ENCODE measurements at regions of chr20 and their contacts with region 1.

Region 1: DNA sequence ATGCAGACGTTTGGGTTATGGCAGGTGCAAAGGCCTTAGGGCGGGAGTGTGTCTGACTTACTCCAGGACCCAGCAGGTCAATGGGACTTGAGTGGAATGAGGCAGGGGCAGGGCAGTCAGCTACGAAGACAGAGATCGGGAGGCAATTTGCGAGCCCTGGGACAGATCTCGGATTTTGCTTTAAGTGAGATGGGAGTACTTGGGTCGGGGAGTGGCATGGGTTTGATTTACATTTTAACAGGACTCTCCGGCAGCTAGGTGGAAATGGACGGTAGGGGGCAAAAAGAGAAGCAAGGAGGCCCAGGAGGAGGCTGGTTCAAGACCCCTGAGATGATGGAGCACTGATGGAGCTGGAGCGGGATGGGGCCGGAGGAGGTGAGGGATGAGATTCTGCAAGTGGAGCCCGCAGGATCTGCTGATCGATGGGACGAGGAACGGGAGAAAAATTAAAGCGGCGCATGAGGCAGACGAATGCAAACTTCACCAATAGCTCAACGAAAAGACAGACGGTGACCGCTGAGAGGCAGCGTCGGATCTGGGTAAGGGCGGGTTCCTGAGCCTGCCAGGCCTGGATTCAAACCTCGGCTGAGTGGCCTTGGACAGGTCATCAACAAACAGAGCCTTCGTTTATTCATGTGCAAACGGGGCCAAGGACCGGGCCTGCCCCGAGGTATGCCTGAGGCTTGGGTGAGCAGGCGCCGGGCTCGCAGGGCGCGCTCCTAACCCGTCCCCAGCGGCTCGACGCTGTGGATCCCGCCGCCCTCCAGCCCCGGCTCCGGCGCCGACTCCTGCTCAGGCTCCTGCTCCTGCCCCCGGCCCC is 756 bp upstream of the RBCK1 start:
- DNase-seq: peak in 8 of 9 donors; percentile 31 to 74 (median 39)
- ATAC-seq: peak; percentile 49
- H3K4me3 ChIP-seq: peak overlapping the region; percentile 71
- H3K4me3 Mint-ChIP-seq: peak overlapping the region; percentile 86 to 96 (median 94)
- H3K27ac ChIP-seq: peak overlapping the region; percentile 83
- H3K27ac Mint-ChIP-seq: peak overlapping the region; percentile 89 to 99 (median 96)
- H3K4me1 ChIP-seq: peaks cover 20 to 32% of the 10 kb centered on the region in 2 donors
- H3K4me1 Mint-ChIP-seq: peaks cover 26 to 59% (median 46%) of the 10 kb centered on the region in 7 donors
- H3K27me3 ChIP-seq: no peaks in the 10 kb centered on the region
- H3K27me3 Mint-ChIP-seq: no peaks in the 10 kb centered on the region

Region 2: GRCh38 chr20:324177-325044 is 82.9 kb before region 1 on chr20:
- CTCF ChIA-PET with region 1: no interaction called
- POLR2A ChIA-PET with region 1: no interaction called
- intact Hi-C with region 1: loop called in 1 of 2 experiments (anchors 1 kb)
- DNase-seq: peak; percentile 74 to 96 (median 84)
- ATAC-seq: peak; percentile 75
- H3K4me3 ChIP-seq: peak overlapping the region; percentile 80
- H3K4me3 Mint-ChIP-seq: peak overlapping the region; percentile 88 to 97 (median 94)
- H3K27ac ChIP-seq: peak overlapping the region; percentile 77
- H3K27ac Mint-ChIP-seq: peak overlapping the region; percentile 84 to 96 (median 94)
- H3K4me1 ChIP-seq: peaks cover 7 to 9% of the 10 kb centered on the region in 2 donors
- H3K4me1 Mint-ChIP-seq: peaks cover 7 to 20% (median 17%) of the 10 kb centered on the region in 7 donors
- H3K27me3 ChIP-seq: no peaks in the 10 kb centered on the region
- H3K27me3 Mint-ChIP-seq: peaks cover 0 to 8% (median 0%) of the 10 kb centered on the region in 5 donors

Region 3: DNA sequence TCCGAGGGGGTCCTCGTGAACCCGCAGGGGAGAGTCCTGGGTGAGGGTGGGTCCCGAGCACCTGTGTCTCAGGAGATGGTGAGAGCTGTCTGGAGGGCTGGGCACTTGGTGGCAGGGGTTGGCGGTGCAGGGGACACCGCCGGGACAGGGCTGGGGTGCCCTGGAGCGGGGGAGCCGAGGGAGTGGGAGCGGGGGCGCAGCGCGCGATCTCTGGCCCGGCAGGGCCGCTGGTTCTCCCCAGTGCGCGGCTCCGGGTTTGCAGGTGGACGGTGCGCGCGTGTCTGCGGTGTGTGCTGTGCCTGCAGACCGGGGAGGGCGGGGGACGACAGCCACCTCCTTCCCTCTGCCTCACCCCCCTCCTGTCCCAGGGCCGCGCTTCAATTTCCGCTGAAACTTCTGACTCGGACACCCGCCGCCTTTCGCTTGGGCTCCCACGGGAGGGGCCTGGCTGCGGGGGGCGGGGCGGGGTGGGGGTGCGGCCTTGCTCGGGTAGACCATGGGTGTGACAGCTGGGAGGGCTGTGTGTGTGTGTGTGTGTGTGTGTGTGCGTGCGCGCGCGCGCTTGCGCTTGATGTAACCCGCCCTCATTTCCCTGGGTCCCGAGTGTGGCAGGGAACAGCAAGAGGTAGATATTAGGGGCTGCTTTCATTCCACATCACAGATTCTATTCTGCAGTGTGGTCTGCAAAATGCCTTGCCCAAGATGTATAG is 25.6 kb before region 1 on chr20:
- CTCF ChIA-PET with region 1: interaction called, 3 read pairs
- POLR2A ChIA-PET with region 1: interaction called, 6 read pairs
- intact Hi-C with region 1: loop called (anchors 1 kb)
- DNase-seq: peak; percentile 41 to 75 (median 64)
- ATAC-seq: peak; percentile 81
- H3K4me3 ChIP-seq: peak overlapping the region; percentile 64
- H3K4me3 Mint-ChIP-seq: peak overlapping the region; percentile 66 to 91 (median 84)
- H3K27ac ChIP-seq: peak overlapping the region; percentile 73
- H3K27ac Mint-ChIP-seq: peak overlapping the region; percentile 55 to 86 (median 78)
- H3K4me1 ChIP-seq: no peaks in the 10 kb centered on the region
- H3K4me1 Mint-ChIP-seq: peaks cover 4 to 34% (median 13%) of the 10 kb centered on the region in 7 donors
- H3K27me3 ChIP-seq: no peaks in the 10 kb centered on the region
- H3K27me3 Mint-ChIP-seq: peaks cover 0 to 3% (median 0%) of the 10 kb centered on the region in 5 donors

Region 4: GRCh38 chr20:438571-439469 is 31.5 kb after region 1 on chr20:
- CTCF ChIA-PET with region 1: interaction called, 4 read pairs
- POLR2A ChIA-PET with region 1: interaction called, 12 read pairs
- intact Hi-C with region 1: loop called in 1 of 2 experiments (anchors 1 kb)
- DNase-seq: peak; percentile 29 to 72 (median 60)
- ATAC-seq: peak; percentile 91
- H3K4me3 ChIP-seq: peak overlapping the region; percentile 45
- H3K4me3 Mint-ChIP-seq: peak overlapping the region; percentile 76 to 97 (median 82)
- H3K27ac ChIP-seq: peak overlapping the region; percentile 39
- H3K27ac Mint-ChIP-seq: peak overlapping the region; percentile 10 to 90 (median 79)
- H3K4me1 ChIP-seq: peaks cover 38 to 42% of the 10 kb centered on the region in 2 donors
- H3K4me1 Mint-ChIP-seq: peaks cover 51 to 72% (median 68%) of the 10 kb centered on the region in 7 donors
- H3K27me3 ChIP-seq: no peaks in the 10 kb centered on the region
- H3K27me3 Mint-ChIP-seq: no peaks in the 10 kb centered on the region

Region 5: DNA sequence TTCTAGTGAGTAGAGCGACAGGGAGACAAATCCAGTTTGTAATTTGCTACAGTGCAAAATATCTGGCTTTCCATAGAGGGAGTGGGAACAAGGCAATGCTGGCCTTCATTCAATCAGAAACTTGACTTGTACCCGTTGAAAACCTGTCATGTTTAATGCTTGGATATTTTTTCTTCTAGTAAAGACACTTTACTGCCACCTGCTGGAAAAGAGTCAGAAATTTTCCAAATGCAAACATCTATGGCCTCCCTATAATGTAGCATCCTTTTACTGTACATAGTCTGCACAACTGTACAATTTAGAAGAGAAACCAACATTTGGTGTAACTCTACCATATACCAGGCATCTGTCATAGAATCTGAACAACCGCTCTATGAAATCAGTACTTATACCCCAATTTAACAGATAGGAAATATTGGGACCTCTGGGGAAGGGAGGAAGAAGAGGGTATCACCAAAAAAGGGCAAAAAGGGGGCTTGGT is 71.6 kb after region 1 on chr20:
- CTCF ChIA-PET with region 1: interaction called, 3 read pairs
- POLR2A ChIA-PET with region 1: interaction called, 5 read pairs
- intact Hi-C with region 1: loop called (anchors 1 to 2 kb)
- DNase-seq: peak in 7 of 9 donors; percentile 45 to 75 (median 68)
- ATAC-seq: peak; percentile 84
- H3K4me3 ChIP-seq: no peak overlapping the region
- H3K4me3 Mint-ChIP-seq: no peak overlapping the region
- H3K27ac ChIP-seq: no peak overlapping the region
- H3K27ac Mint-ChIP-seq: peak overlapping the region in 7 of 9 donors; percentile 27 to 82 (median 56)
- H3K4me1 ChIP-seq: peaks cover 0 to 6% of the 10 kb centered on the region in 2 donors
- H3K4me1 Mint-ChIP-seq: peaks cover 8 to 27% (median 24%) of the 10 kb centered on the region in 7 donors
- H3K27me3 ChIP-seq: no peaks in the 10 kb centered on the region
- H3K27me3 Mint-ChIP-seq: no peaks in the 10 kb centered on the region